Endothelial cell of umbilical vein (primary cell): ENCODE measurements at regions of chr1 and their contacts with region 1.

Region 1: DNA sequence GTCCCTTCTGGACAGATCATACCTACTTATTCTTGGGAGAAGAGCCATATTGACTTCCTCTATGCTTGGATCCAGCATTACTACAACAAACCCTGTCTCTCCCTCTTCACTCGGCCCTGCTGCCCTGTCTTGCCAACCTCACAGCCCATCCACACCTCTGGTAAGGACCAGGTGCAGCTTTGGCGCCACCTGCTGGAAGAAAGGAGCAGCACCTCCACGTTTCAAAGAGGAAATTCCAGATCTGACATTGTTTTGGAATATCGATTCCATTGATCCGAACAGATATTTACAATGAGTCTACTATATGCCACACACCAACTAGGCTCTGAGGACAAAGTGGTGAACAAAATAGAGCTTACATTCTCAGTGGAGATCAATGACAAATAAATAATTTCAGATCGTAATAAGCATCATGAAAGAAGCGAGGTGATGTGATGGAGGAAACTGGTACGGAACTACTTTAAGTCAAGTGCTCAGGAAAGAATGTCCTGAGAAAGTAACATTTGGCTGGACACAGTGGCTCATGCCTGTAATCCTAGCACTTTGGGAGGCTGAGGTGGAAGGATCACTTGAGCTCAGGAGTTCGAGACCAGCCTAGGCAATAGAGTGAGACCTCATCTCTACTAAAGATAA is 18.7 kb downstream of the MFSD2A start:
- DNase-seq: peak; percentile 63
- H3K4me3 ChIP-seq: no peak overlapping the region
- H3K27ac ChIP-seq: no peak overlapping the region
- H3K4me1 ChIP-seq: no peaks in the 10 kb centered on the region
- H3K27me3 ChIP-seq: no peaks in the 10 kb centered on the region
- CTCF ChIP-seq: peak; percentile 87 to 94
- POLR2A ChIP-seq: no peak

Region 2: GRCh38 chr1:39564340-39564739 is 409.3 kb before region 1 on chr1:
- CTCF ChIA-PET with region 1: no interaction called
- POLR2A ChIA-PET with region 1: no interaction called
- dilution Hi-C with region 1: no loop called
- intact Hi-C with region 1: no loop called
- DNase-seq: no peak
- H3K4me3 ChIP-seq: no peak overlapping the region
- H3K27ac ChIP-seq: no peak overlapping the region
- H3K4me1 ChIP-seq: no peaks in the 10 kb centered on the region
- H3K27me3 ChIP-seq: no peaks in the 10 kb centered on the region
- CTCF ChIP-seq: no peak
- POLR2A ChIP-seq: no peak

Region 3: DNA sequence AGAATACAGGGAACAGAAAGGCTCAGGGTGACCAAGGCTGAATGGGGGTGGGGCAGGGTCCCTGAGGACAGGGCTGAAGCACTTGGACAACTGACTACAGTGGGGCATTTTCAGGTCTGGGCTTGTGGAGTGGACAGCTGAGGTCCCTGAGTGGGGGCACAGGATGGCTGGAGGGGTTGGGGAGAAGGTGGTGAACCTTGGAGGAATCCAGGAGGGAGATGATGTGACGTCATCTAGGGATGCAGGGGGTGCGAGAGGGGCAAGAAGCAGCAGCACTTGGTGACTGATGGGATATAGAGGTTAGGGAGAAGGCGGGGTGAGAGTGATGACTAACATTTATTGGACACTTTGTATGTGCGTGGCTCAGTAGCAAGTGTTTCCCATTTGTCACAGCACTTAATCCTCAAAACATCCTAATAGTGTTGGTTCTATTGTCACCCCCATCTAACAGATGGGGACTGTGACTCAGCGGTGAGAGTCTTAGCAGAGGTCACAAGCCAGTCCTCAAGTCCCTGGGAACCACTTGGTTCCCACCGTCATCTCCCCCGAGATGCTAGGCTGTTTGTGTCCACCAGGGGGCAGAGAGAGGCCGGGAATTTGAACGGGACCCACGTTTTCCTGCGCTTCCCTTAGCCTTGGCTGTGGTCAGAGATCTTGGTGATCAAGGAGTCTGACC is 157.1 kb before region 1 on chr1:
- CTCF ChIA-PET with region 1: interaction called, 40 read pairs
- POLR2A ChIA-PET with region 1: no interaction called
- dilution Hi-C with region 1: no loop called
- intact Hi-C with region 1: loop called (anchors 1 kb)
- DNase-seq: peak; percentile 78
- H3K4me3 ChIP-seq: no peak overlapping the region
- H3K27ac ChIP-seq: no peak overlapping the region
- H3K4me1 ChIP-seq: no peaks in the 10 kb centered on the region
- H3K27me3 ChIP-seq: no peaks in the 10 kb centered on the region
- CTCF ChIP-seq: peak; percentile 77 to 78
- POLR2A ChIP-seq: no peak

Region 4: DNA sequence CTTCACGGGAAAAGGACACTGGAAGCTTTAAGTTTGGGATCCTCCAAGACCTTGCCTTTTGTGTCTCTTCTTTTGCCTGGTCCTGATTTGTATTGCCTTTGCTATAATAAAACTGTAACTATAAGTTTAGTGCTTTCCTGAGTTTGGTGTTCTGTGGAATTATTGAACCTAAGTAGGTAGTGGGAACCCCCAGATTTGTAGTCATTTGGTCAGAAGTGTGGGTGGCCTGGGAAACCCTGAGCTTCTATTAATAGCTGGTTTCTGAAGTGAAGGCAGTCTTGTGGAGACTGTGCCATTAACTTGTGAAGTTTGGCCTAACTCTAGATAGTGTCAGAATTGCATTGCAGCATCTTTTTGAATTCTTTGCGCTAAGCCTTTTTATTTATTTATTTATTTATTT is 65.1 kb before region 1 on chr1:
- CTCF ChIA-PET with region 1: no interaction called
- POLR2A ChIA-PET with region 1: no interaction called
- dilution Hi-C with region 1: no loop called
- intact Hi-C with region 1: no loop called
- DNase-seq: no peak
- H3K4me3 ChIP-seq: no peak overlapping the region
- H3K27ac ChIP-seq: no peak overlapping the region
- H3K4me1 ChIP-seq: no peaks in the 10 kb centered on the region
- H3K27me3 ChIP-seq: peaks cover 4 to 17% of the 10 kb centered on the region in 2 experiments
- CTCF ChIP-seq: no peak
- POLR2A ChIP-seq: no peak

Region 5: GRCh38 chr1:39919545-39919944 is 54.1 kb before region 1 on chr1:
- CTCF ChIA-PET with region 1: interaction called, 76 read pairs
- POLR2A ChIA-PET with region 1: no interaction called
- dilution Hi-C with region 1: no loop called
- intact Hi-C with region 1: loop called (anchors 1 kb)
- DNase-seq: peak; percentile 49
- H3K4me3 ChIP-seq: no peak overlapping the region
- H3K27ac ChIP-seq: no peak overlapping the region
- H3K4me1 ChIP-seq: no peaks in the 10 kb centered on the region
- H3K27me3 ChIP-seq: peaks cover 0 to 10% of the 10 kb centered on the region in 2 experiments
- CTCF ChIP-seq: peak; percentile 27 to 38
- POLR2A ChIP-seq: no peak

Region 6: GRCh38 chr1:39954816-39955546 is 18.6 kb before region 1 on chr1 and contains the start of gene MFSD2A:
- CTCF ChIA-PET with region 1: interaction called, 12 read pairs
- POLR2A ChIA-PET with region 1: no interaction called
- dilution Hi-C with region 1: no loop called
- intact Hi-C with region 1: no loop called
- DNase-seq: peak; percentile 91
- H3K4me3 ChIP-seq: peak within 1 kb of the TSS; percentile 47 to 87 (median 75)
- H3K27ac ChIP-seq: peak within 1 kb of the TSS; percentile 10
- H3K4me1 ChIP-seq: peaks cover 12% of the 10 kb centered on the region
- H3K27me3 ChIP-seq: no peaks in the 10 kb centered on the region
- CTCF ChIP-seq: no peak
- POLR2A ChIP-seq: no peak
- total RNA-seq, gene MFSD2A: 4.3 and 5.5 TPM in 2 replicates

Region 7: GRCh38 chr1:40004857-40005256 is 31.2 kb after region 1 on chr1:
- CTCF ChIA-PET with region 1: no interaction called
- POLR2A ChIA-PET with region 1: no interaction called
- dilution Hi-C with region 1: no loop called
- intact Hi-C with region 1: no loop called
- DNase-seq: no peak
- H3K4me3 ChIP-seq: no peak overlapping the region
- H3K27ac ChIP-seq: no peak overlapping the region
- H3K4me1 ChIP-seq: no peaks in the 10 kb centered on the region
- H3K27me3 ChIP-seq: no peaks in the 10 kb centered on the region
- CTCF ChIP-seq: no peak
- POLR2A ChIP-seq: no peak

Region 8: DNA sequence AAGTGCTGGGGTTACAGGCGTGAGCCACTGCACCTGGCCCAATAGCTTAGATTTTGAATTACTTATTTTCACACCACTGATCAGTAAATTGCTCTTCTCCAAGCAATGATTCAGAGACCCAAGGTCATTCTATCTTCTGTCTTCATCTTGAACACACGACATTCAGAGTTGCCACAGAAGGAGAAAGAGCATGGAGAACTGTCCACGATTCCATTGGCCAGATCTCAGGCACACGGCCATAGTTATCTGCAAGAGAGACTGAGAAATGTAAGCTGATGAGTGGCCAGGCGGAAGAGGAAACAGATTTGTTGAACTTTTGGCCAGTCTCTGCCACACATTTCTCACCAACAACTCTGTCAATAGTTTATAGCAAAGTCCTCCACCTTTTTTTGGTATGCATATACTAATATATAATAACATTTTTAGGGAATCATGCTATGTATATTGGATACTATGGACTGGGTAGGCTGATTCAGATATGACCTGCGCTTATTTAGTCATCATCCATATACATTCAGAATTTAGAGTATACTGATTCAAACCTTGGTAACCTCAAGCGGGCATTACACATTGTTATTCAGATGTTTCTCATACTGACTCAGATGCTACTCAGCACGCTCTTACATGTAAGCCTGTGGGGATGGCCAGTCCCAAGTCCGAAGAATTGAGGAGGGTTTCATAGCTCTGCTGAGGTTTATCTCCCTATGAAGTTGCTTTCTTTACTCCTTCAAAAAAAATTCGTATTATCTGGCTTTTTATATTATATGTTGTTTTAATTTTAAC is 41.4 kb after region 1 on chr1:
- CTCF ChIA-PET with region 1: interaction called, 10 read pairs
- POLR2A ChIA-PET with region 1: no interaction called
- dilution Hi-C with region 1: no loop called
- intact Hi-C with region 1: no loop called
- DNase-seq: peak; percentile 81
- H3K4me3 ChIP-seq: no peak overlapping the region
- H3K27ac ChIP-seq: peak overlapping the region; percentile 92
- H3K4me1 ChIP-seq: peaks cover 22% of the 10 kb centered on the region
- H3K27me3 ChIP-seq: no peaks in the 10 kb centered on the region
- CTCF ChIP-seq: no peak
- POLR2A ChIP-seq: no peak